CD4-positive, alpha-beta T cell (primary cell): ENCODE measurements at regions of chr16 and their contacts with region 1.

Region 1: DNA sequence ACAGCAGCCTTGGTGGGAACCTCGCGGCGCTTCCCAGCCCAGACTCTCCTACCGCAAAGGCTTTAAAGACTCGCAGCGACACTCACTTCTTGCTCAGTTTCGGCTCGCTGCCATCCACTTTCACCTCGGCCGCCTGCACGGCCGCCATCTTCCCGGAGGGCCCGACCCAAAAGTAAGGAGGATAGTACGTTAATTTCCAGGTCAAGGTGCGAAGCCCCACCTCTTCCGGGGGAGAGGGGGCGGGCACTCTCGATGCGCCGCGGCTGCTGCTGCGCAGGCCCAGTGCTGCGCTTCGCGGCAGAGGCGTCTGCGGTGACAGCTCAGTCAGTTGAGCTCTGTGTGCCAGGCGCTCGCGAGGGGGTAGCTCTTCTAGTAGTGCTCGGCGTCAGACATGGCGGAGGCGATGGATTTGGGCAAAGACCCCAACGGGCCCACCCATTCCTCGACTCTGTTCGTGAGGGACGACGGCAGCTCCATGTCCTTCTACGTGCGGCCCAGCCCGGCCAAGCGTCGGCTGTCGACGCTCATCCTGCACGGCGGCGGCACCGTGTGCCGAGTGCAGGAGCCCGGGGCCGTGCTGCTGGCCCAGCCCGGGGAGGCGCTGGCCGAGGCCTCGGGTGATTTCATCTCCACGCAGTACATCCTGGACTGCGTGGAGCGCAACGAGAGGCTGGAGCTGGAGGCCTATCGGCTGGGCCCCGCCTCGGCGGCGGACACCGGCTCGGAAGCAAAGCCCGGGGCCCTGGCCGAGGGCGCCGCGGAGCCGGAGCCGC is at the starts of genes KARS1 and TERF2IP:
- DNase-seq: peak; percentile 90 to 98 (median 94)
- ATAC-seq: peak; percentile 82
- H3K4me3 ChIP-seq: peak within 1 kb of the TSS; percentile 82
- H3K4me3 Mint-ChIP-seq: peak within 1 kb of the TSS; percentile 98
- H3K27ac ChIP-seq: peak within 1 kb of the TSS; percentile 95 to 96
- H3K27ac Mint-ChIP-seq: peak within 1 kb of the TSS; percentile 100
- H3K4me1 ChIP-seq: peaks cover 42% of the 10 kb centered on the region
- H3K4me1 Mint-ChIP-seq: peaks cover 68% of the 10 kb centered on the region
- H3K27me3 ChIP-seq: no peaks in the 10 kb centered on the region
- H3K27me3 Mint-ChIP-seq: no peaks in the 10 kb centered on the region
- CTCF ChIP-seq: no peak
- total RNA-seq, gene KARS1: 151 to 153 TPM
- total RNA-seq, gene TERF2IP: 122 to 124 TPM

Region 2: DNA sequence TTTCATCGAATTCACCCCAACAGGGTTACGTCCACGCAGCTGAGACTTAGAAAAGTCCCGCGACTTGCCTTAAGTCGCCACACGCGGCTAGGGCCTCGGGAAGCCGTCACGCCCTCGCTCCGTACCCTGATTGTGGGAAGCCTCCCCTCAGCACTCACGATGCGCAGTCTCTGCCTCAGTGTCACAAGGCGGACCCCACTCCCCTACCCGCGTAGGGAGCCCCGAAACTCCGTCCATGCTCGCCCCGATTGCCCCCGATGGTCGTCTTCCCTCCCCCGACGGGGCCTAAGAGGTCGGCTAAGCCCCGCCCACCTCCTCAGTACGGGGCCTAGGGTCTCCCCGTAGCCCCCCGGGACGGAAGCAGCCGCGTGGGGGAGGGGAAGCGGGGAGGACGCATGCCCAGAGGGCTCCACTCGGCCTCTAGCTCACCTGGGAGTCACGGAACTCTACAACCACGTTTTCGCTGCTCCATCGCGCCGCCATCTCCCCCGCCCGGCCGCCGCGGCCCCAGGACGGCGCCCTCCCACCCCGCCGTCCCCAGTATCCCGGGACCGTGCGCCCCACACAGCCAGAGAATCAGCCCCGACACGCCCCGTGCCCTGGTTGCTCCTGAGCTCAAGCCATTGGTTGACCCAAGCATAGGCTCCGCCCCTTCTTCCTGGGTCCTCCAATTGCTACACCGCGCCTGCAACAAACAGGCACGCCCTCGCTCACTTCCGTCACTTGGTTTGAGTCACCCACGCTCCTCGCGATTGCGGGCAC is 663.0 kb before region 1 on chr16 and contains the start of gene WDR59:
- CTCF ChIA-PET with region 1: no interaction called
- POLR2A ChIA-PET with region 1: interaction called, 13 read pairs
- intact Hi-C with region 1: no loop called
- DNase-seq: peak; percentile 94 to 100 (median 98)
- ATAC-seq: peak; percentile 98
- H3K4me3 ChIP-seq: peak within 1 kb of the TSS; percentile 100
- H3K4me3 Mint-ChIP-seq: peak within 1 kb of the TSS; percentile 96
- H3K27ac ChIP-seq: peak within 1 kb of the TSS; percentile 44 to 61
- H3K27ac Mint-ChIP-seq: peak within 1 kb of the TSS; percentile 84
- H3K4me1 ChIP-seq: peaks cover 23% of the 10 kb centered on the region
- H3K4me1 Mint-ChIP-seq: peaks cover 23% of the 10 kb centered on the region
- H3K27me3 ChIP-seq: no peaks in the 10 kb centered on the region
- H3K27me3 Mint-ChIP-seq: no peaks in the 10 kb centered on the region
- CTCF ChIP-seq: no peak
- total RNA-seq, gene WDR59: 60.2 to 67.2 TPM

Region 3: GRCh38 chr16:75464130-75464918 is 183.4 kb before region 1 on chr16 and contains the start of gene TMEM170A:
- CTCF ChIA-PET with region 1: interaction called, 6 read pairs
- POLR2A ChIA-PET with region 1: interaction called, 16 read pairs
- intact Hi-C with region 1: loop called in 1 of 2 experiments (anchors 5 kb)
- DNase-seq: peak; percentile 97 to 100 (median 99)
- ATAC-seq: peak; percentile 86
- H3K4me3 ChIP-seq: peak within 1 kb of the TSS; percentile 87
- H3K4me3 Mint-ChIP-seq: peak within 1 kb of the TSS; percentile 96
- H3K27ac ChIP-seq: peak within 1 kb of the TSS; percentile 88 to 99
- H3K27ac Mint-ChIP-seq: peak within 1 kb of the TSS; percentile 95
- H3K4me1 ChIP-seq: peaks cover 40% of the 10 kb centered on the region
- H3K4me1 Mint-ChIP-seq: peaks cover 47% of the 10 kb centered on the region
- H3K27me3 ChIP-seq: no peaks in the 10 kb centered on the region
- H3K27me3 Mint-ChIP-seq: no peaks in the 10 kb centered on the region
- CTCF ChIP-seq: peak; percentile 100
- total RNA-seq, gene TMEM170A: 34.3 to 37.8 TPM

Region 4: DNA sequence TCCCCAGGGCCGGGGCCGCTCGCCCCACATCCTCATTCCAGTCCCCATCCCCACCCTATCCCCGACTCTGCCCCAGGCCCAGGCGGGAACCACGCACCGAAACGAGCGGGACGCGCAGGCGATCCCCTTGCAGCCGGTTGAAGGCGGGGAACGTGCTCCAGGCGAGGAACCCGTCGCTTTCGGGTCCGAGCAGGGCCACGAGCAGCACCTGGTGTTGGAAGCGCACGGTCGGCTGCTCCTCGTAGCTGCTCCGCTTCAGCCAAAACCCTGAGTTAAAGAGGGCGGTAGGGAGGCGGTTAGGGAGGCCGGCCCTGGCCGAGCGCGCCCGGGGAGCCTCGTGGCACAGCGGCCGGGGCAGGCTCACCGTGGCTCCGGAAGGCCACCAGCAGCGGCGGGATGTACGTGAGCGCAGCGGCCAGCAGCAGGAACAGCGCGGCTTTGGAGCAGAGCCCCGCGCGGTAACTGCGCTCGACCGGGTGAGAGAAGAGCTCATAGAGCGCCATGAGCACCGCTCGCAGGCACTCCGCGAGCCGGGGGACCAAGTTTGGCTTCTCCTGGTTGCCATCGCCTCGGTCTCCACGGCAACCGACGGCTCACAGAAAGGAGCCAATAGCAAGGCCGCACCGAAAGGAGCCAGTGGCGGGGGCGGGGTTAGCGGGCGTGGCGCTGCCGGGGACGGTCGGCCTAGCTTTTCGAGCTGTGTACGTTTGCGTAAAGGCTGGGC is 91.8 kb before region 1 on chr16 and contains the start of gene TMEM231:
- CTCF ChIA-PET with region 1: no interaction called
- POLR2A ChIA-PET with region 1: interaction called, 48 read pairs
- intact Hi-C with region 1: no loop called
- DNase-seq: peak; percentile 95 to 99 (median 97)
- ATAC-seq: peak; percentile 97
- H3K4me3 ChIP-seq: peak within 1 kb of the TSS; percentile 74
- H3K4me3 Mint-ChIP-seq: peak within 1 kb of the TSS; percentile 88
- H3K27ac ChIP-seq: peak within 1 kb of the TSS; percentile 58 to 82
- H3K27ac Mint-ChIP-seq: peak within 1 kb of the TSS; percentile 65
- H3K4me1 ChIP-seq: peaks cover 18% of the 10 kb centered on the region
- H3K4me1 Mint-ChIP-seq: peaks cover 13% of the 10 kb centered on the region
- H3K27me3 ChIP-seq: peaks cover 0 to 3% of the 10 kb centered on the region in 2 experiments
- H3K27me3 Mint-ChIP-seq: peaks cover 8% of the 10 kb centered on the region
- CTCF ChIP-seq: no peak
- total RNA-seq, gene TMEM231: 2.5 TPM

Region 5: GRCh38 chr16:75614066-75614897 is 33.4 kb before region 1 on chr16:
- CTCF ChIA-PET with region 1: no interaction called
- POLR2A ChIA-PET with region 1: interaction called, 239 read pairs
- intact Hi-C with region 1: no loop called
- DNase-seq: no peak
- ATAC-seq: no peak
- H3K4me3 ChIP-seq: no peak overlapping the region
- H3K4me3 Mint-ChIP-seq: no peak overlapping the region
- H3K27ac ChIP-seq: no peak overlapping the region
- H3K27ac Mint-ChIP-seq: no peak overlapping the region
- H3K4me1 ChIP-seq: peaks cover 32% of the 10 kb centered on the region
- H3K4me1 Mint-ChIP-seq: peaks cover 27% of the 10 kb centered on the region
- H3K27me3 ChIP-seq: no peaks in the 10 kb centered on the region
- H3K27me3 Mint-ChIP-seq: no peaks in the 10 kb centered on the region
- CTCF ChIP-seq: no peak

Region 6: DNA sequence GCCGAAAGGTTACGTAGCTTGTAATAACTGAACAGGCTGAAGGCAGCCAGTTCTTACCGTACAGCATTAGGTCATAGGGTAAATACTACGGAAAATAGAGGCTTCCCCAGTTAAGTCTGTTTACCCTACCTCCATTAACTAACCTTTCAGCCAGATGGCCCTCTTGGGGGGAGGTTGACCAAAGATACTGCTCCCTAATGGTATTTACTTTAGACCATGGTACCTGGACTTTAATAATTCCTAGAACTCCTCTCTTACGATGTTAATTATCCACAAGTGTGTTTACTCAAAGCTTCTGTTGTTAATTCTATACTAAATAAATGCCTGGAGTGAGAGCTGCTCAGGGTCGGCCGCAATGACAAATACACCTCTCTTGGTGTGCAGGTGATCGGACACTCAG is 14.8 kb before region 1 on chr16:
- CTCF ChIA-PET with region 1: interaction called, 5 read pairs
- POLR2A ChIA-PET with region 1: interaction called, 35 read pairs
- intact Hi-C with region 1: no loop called
- DNase-seq: no peak
- ATAC-seq: no peak
- H3K4me3 ChIP-seq: no peak overlapping the region
- H3K4me3 Mint-ChIP-seq: peak overlapping the region; percentile 7
- H3K27ac ChIP-seq: no peak overlapping the region
- H3K27ac Mint-ChIP-seq: no peak overlapping the region
- H3K4me1 ChIP-seq: peaks cover 16% of the 10 kb centered on the region
- H3K4me1 Mint-ChIP-seq: peaks cover 17% of the 10 kb centered on the region
- H3K27me3 ChIP-seq: no peaks in the 10 kb centered on the region
- H3K27me3 Mint-ChIP-seq: no peaks in the 10 kb centered on the region
- CTCF ChIP-seq: no peak

Region 7: GRCh38 chr16:77190478-77191258 is 1543.0 kb after region 1 on chr16 and contains the start of gene MON1B:
- CTCF ChIA-PET with region 1: no interaction called
- POLR2A ChIA-PET with region 1: interaction called, 21 read pairs
- intact Hi-C with region 1: loop called (anchors 1 to 5 kb)
- DNase-seq: peak; percentile 88 to 99 (median 92)
- ATAC-seq: peak; percentile 92
- H3K4me3 ChIP-seq: peak within 1 kb of the TSS; percentile 98
- H3K4me3 Mint-ChIP-seq: peak within 1 kb of the TSS; percentile 92
- H3K27ac ChIP-seq: peak within 1 kb of the TSS; percentile 95 to 99
- H3K27ac Mint-ChIP-seq: peak within 1 kb of the TSS; percentile 97
- H3K4me1 ChIP-seq: peaks cover 44% of the 10 kb centered on the region
- H3K4me1 Mint-ChIP-seq: peaks cover 50% of the 10 kb centered on the region
- H3K27me3 ChIP-seq: no peaks in the 10 kb centered on the region
- H3K27me3 Mint-ChIP-seq: no peaks in the 10 kb centered on the region
- CTCF ChIP-seq: no peak
- total RNA-seq, gene MON1B: 52.3 to 52.6 TPM